CD4-positive, alpha-beta memory T cell (primary cell): ENCODE measurements at regions of chr17 and their contacts with region 1.

Region 1: DNA sequence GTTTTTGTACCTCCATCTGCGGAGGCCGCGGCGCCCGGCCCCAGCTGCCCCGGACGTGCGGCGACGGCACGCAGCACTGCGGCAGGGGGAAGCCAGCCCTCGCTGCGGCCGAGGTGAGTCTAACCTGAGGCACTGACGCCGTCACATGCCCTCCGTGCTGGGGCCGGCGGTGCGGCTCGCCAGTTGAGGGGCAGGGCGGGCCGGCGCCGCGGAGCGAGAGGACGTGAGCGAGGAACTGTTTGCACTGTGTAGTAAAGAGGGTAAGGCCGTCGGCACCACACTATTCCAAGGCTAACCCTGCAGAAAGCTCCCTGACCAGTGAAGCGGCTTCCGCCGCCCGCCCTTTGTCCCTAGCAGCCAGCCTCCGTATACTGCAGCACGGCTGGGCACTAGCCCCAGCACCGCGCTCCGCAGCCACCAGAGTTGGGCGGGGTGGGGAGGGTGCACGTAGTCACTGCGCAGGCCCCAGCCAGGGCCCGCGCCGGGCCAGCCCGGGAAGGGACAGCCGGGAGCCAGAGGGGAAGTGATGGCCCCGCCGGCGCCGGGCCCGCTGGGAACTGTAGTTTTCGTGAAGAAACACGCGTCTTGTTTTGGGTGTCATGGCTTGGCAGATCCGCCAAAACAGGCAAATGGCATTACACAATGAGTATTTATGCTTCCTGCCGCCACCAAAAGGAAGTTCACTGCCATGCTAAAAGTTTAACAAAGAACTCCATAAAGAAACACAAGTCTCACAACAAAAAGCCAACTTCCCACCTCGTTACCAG is 580 bp upstream of the KANSL1 start:
- DNase-seq: peak; percentile 89 to 97 (median 94)
- H3K4me3 ChIP-seq: peak overlapping the region; percentile 40 to 93
- H3K4me3 Mint-ChIP-seq: peak overlapping the region; percentile 74 to 89 (median 86)
- H3K27ac ChIP-seq: peak overlapping the region; percentile 94
- H3K27ac Mint-ChIP-seq: peak overlapping the region; percentile 88 to 99 (median 98)
- H3K4me1 ChIP-seq: peaks cover 65% of the 10 kb centered on the region
- H3K4me1 Mint-ChIP-seq: peaks cover 35 to 80% (median 55%) of the 10 kb centered on the region in 4 donors
- H3K27me3 ChIP-seq: no peaks in the 10 kb centered on the region
- H3K27me3 Mint-ChIP-seq: no peaks in the 10 kb centered on the region

Region 2: DNA sequence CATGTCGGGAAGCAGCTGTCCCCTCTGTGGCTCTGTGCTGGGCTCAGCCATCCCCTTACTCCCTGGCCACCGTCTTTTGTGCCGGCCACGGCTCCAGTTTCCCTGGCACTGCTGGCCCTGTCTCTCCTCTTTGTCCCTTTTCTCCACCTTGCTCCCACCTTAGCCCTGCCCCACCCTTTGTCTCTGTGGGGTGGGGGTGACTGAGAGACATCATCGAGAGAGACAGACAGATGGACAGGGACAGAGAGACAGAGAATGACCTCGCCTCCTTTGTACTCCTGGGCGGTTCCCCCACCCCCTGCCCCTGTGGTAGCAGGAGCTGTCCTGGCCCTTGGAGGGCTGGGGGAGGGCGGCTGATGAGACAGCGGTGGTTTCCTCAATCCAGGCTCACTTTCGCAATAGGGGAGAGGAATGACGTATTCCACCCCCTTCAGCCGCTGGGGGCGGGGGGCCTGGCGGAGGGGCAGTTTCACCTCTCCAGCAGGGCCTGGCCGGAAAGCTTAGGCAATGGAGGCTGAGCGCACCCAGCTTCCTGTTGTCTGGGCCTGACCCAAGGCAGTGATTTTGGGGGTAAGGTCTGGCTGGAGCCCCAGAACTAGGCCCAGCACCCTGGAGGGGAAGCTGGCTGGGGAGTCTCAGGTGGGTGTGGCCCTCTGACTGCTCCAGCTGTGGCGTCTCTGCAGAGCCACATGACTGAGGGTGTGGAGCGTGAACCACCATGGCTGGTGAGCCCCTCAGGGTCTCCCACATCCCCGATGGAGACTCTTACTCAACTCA is 964.9 kb before region 1 on chr17:
- CTCF ChIA-PET with region 1: no interaction called
- POLR2A ChIA-PET with region 1: no interaction called
- intact Hi-C with region 1: loop called (anchors 5 kb)
- DNase-seq: peak; percentile 78 to 97 (median 84)
- H3K4me3 ChIP-seq: peak overlapping the region; percentile 43 to 74
- H3K4me3 Mint-ChIP-seq: peak overlapping the region; percentile 96 to 100 (median 99)
- H3K27ac ChIP-seq: peak overlapping the region; percentile 97
- H3K27ac Mint-ChIP-seq: peak overlapping the region; percentile 99 to 100 (median 100)
- H3K4me1 ChIP-seq: peaks cover 95% of the 10 kb centered on the region
- H3K4me1 Mint-ChIP-seq: peaks cover 48 to 99% (median 69%) of the 10 kb centered on the region in 4 donors
- H3K27me3 ChIP-seq: no peaks in the 10 kb centered on the region
- H3K27me3 Mint-ChIP-seq: no peaks in the 10 kb centered on the region

Region 3: GRCh38 chr17:46020023-46020761 is 173.6 kb before region 1 on chr17:
- CTCF ChIA-PET with region 1: no interaction called
- POLR2A ChIA-PET with region 1: interaction called, 13 read pairs
- intact Hi-C with region 1: no loop called
- DNase-seq: peak; percentile 67 to 78 (median 73)
- H3K4me3 ChIP-seq: no peak overlapping the region
- H3K4me3 Mint-ChIP-seq: peak overlapping the region; percentile 22 to 69 (median 47)
- H3K27ac ChIP-seq: peak overlapping the region; percentile 42
- H3K27ac Mint-ChIP-seq: peak overlapping the region; percentile 85 to 96 (median 93)
- H3K4me1 ChIP-seq: peaks cover 40% of the 10 kb centered on the region
- H3K4me1 Mint-ChIP-seq: peaks cover 12 to 35% (median 28%) of the 10 kb centered on the region in 4 donors
- H3K27me3 ChIP-seq: no peaks in the 10 kb centered on the region
- H3K27me3 Mint-ChIP-seq: no peaks in the 10 kb centered on the region

Region 4: DNA sequence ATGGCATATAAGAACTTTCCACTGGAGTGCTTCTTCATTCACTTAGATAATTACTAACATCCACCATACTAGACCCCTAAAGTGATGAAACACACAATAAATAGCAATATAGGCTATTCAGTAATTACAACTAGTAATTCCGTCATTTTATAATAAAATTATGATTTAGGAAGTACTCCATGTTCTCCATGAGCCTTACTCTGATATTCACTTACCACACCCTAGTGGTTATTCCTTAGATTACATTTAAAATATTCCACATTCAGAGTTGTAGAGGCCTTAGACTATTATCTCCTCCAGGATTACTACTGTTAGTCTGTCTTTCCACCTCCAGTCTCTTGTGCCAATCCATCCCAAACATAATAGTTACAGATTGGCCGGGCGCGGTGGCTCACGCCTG is 132.4 kb before region 1 on chr17:
- CTCF ChIA-PET with region 1: interaction called, 4 read pairs
- POLR2A ChIA-PET with region 1: interaction called, 12 read pairs
- intact Hi-C with region 1: no loop called
- DNase-seq: no peak
- H3K4me3 ChIP-seq: no peak overlapping the region
- H3K4me3 Mint-ChIP-seq: no peak overlapping the region
- H3K27ac ChIP-seq: no peak overlapping the region
- H3K27ac Mint-ChIP-seq: peak overlapping the region in 3 of 7 donors; percentile 8 to 46 (median 42)
- H3K4me1 ChIP-seq: peaks cover 7% of the 10 kb centered on the region
- H3K4me1 Mint-ChIP-seq: peaks cover 18 to 30% (median 20%) of the 10 kb centered on the region in 4 donors
- H3K27me3 ChIP-seq: no peaks in the 10 kb centered on the region
- H3K27me3 Mint-ChIP-seq: no peaks in the 10 kb centered on the region

Region 5: DNA sequence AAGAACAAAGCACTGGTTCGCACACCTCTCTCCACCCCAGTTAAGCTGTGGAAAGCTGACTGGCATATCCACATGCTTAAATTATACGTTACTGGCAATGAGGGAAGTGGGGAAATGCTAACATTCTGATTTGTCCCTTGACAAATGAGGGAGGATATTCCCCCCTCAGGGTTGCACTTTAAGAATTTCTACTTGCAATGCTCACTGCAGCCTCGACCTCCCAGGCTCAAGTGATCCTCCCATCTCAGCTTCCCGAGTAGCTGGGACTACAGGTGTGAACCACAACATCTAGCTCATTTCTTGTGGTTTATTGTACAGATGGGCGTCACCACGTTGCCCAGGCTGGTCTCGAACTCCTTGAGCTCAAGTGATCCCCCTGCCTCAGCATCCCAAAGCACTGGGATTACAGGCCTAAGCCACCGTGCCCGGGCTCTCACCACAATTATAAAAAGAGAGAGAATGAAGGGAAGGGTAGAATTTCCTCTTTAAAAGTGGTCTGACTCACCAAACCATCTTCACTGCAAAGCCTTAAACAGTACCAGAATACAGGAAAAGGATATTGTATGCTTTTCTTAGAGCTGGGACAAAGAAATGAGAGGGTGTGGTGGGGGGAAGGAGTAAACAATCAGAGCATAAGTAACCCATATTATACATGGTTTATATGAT is 39.5 kb before region 1 on chr17:
- CTCF ChIA-PET with region 1: interaction called, 10 read pairs
- POLR2A ChIA-PET with region 1: interaction called, 54 read pairs
- intact Hi-C with region 1: loop called (anchors 2 kb)
- DNase-seq: peak; percentile 19 to 65 (median 26)
- H3K4me3 ChIP-seq: peak overlapping the region in 1 of 2 donors; percentile 17
- H3K4me3 Mint-ChIP-seq: peak overlapping the region; percentile 33 to 84 (median 71)
- H3K27ac ChIP-seq: peak overlapping the region; percentile 40
- H3K27ac Mint-ChIP-seq: peak overlapping the region; percentile 63 to 92 (median 85)
- H3K4me1 ChIP-seq: peaks cover 98% of the 10 kb centered on the region
- H3K4me1 Mint-ChIP-seq: peaks cover 67 to 94% (median 84%) of the 10 kb centered on the region in 4 donors
- H3K27me3 ChIP-seq: no peaks in the 10 kb centered on the region
- H3K27me3 Mint-ChIP-seq: no peaks in the 10 kb centered on the region

Region 6: DNA sequence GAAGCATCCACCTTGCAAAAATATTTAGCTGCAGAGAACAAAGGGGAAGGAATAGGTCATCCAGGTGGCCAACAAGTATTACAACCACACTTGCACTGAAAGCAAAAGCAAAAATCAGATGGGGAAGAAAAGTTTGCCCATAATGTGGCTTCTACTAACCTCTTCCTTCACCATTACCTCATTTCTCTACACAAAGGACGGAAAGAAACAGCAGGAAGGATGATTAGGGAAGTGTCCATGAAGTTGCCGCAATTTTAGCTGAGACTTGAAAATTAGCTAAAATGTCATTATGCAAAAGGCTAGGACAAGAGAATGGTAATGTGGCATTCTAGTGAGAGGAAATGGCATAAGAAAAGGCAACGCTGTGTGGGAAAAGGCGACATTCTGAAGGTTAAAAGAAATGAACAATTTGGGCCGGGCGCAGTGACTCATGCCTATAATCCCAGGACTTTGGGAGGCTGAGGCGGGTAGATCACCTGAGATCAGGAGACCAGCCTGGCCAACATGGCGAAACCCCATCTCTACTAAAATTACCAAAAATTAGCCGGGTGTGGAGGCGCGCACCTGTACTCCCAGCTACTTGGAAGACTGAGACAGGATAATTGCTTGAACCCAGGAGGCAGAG is 14.3 kb before region 1 on chr17:
- CTCF ChIA-PET with region 1: interaction called, 10 read pairs
- POLR2A ChIA-PET with region 1: interaction called, 68 read pairs
- intact Hi-C with region 1: loop called (anchors 1 kb)
- DNase-seq: no peak
- H3K4me3 ChIP-seq: no peak overlapping the region
- H3K4me3 Mint-ChIP-seq: peak overlapping the region; percentile 29 to 85 (median 72)
- H3K27ac ChIP-seq: no peak overlapping the region
- H3K27ac Mint-ChIP-seq: peak overlapping the region; percentile 11 to 86 (median 70)
- H3K4me1 ChIP-seq: peaks cover 92% of the 10 kb centered on the region
- H3K4me1 Mint-ChIP-seq: peaks cover 67 to 96% (median 85%) of the 10 kb centered on the region in 4 donors
- H3K27me3 ChIP-seq: no peaks in the 10 kb centered on the region
- H3K27me3 Mint-ChIP-seq: no peaks in the 10 kb centered on the region